CD14-positive monocyte (primary cell): ENCODE measurements at regions of chr2 and their contacts with region 1.

Region 1: GRCh38 chr2:17719562-17720371 is 33.8 kb downstream of the SMC6 start:
- DNase-seq: peak in 2 of 3 donors; percentile 8 to 13
- H3K4me3 ChIP-seq: no peak overlapping the region
- H3K4me3 Mint-ChIP-seq: no peak overlapping the region
- H3K27ac ChIP-seq: no peak overlapping the region
- H3K27ac Mint-ChIP-seq: no peak overlapping the region
- H3K4me1 ChIP-seq: no peaks in the 10 kb centered on the region
- H3K4me1 Mint-ChIP-seq: no peaks in the 10 kb centered on the region
- H3K27me3 ChIP-seq: no peaks in the 10 kb centered on the region
- H3K27me3 Mint-ChIP-seq: no peaks in the 10 kb centered on the region
- CTCF ChIP-seq: peak; percentile 93

Region 2: DNA sequence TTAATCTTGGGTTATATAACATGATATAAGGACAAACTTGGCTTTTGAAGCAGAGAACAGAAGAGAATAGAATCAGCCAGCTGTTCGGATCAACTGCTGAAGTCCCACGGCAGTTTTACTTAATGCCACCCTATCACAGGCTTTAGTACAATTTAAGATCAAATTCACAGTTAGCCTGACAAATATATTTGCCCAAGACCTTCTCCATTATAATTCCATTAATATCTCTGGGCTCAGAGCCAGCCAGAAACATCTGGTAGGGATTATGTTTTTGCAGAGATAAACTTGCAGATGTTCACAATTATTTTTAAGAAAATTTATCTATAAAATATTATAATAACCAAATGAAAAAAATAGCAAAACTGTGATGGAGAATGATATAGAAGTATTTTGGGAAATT is 582.9 kb before region 1 on chr2:
- intact Hi-C with region 1: no loop called
- DNase-seq: no peak
- H3K4me3 ChIP-seq: no peak overlapping the region
- H3K4me3 Mint-ChIP-seq: no peak overlapping the region
- H3K27ac ChIP-seq: no peak overlapping the region
- H3K27ac Mint-ChIP-seq: no peak overlapping the region
- H3K4me1 ChIP-seq: no peaks in the 10 kb centered on the region
- H3K4me1 Mint-ChIP-seq: no peaks in the 10 kb centered on the region
- H3K27me3 ChIP-seq: no peaks in the 10 kb centered on the region
- H3K27me3 Mint-ChIP-seq: peaks cover 0 to 1% (median 1%) of the 10 kb centered on the region in 3 donors
- CTCF ChIP-seq: no peak

Region 3: DNA sequence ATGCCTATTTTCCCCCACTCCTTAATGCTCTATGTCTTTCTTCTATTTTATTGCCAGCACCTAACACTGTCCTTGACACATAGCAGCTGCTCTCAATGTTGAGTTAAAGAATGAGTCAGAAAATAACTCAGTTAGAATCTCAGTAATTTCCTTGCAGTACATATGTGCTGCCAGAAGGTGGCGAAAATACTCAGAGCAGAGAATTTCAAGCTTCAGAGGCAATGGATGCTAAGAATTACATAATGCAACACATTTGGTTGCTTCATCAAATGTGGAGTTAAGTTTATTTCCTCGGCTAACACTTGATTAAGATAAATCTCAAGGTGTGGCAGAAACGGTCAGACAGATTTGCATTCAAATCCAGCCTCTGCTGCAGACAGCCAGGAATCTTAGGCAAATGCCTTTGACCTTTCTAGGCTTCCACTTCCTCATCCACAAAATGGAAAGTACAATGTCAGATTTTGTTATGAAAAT is 73.6 kb before region 1 on chr2:
- intact Hi-C with region 1: no loop called
- DNase-seq: peak; percentile 59 to 74 (median 72)
- H3K4me3 ChIP-seq: no peak overlapping the region
- H3K4me3 Mint-ChIP-seq: no peak overlapping the region
- H3K27ac ChIP-seq: peak overlapping the region in 1 of 2 donors; percentile 7
- H3K27ac Mint-ChIP-seq: peak overlapping the region in 3 of 7 donors; percentile 10 to 75 (median 61)
- H3K4me1 ChIP-seq: peaks cover 37 to 46% of the 10 kb centered on the region in 2 donors
- H3K4me1 Mint-ChIP-seq: peaks cover 64% of the 10 kb centered on the region
- H3K27me3 ChIP-seq: no peaks in the 10 kb centered on the region
- H3K27me3 Mint-ChIP-seq: peaks cover 0 to 5% (median 0%) of the 10 kb centered on the region in 3 donors
- CTCF ChIP-seq: peak; percentile 89

Region 4: GRCh38 chr2:17672583-17673317 is 47.0 kb before region 1 on chr2:
- intact Hi-C with region 1: no loop called
- DNase-seq: no peak
- H3K4me3 ChIP-seq: no peak overlapping the region
- H3K4me3 Mint-ChIP-seq: no peak overlapping the region
- H3K27ac ChIP-seq: no peak overlapping the region
- H3K27ac Mint-ChIP-seq: no peak overlapping the region
- H3K4me1 ChIP-seq: no peaks in the 10 kb centered on the region
- H3K4me1 Mint-ChIP-seq: no peaks in the 10 kb centered on the region
- H3K27me3 ChIP-seq: no peaks in the 10 kb centered on the region
- H3K27me3 Mint-ChIP-seq: peaks cover 0 to 2% (median 0%) of the 10 kb centered on the region in 3 donors
- CTCF ChIP-seq: no peak

Region 5: GRCh38 chr2:17830053-17831034 is 110.6 kb after region 1 on chr2:
- intact Hi-C with region 1: loop called (anchors 1 to 10 kb)
- DNase-seq: peak in 2 of 3 donors; percentile 30 to 44
- H3K4me3 ChIP-seq: peak overlapping the region in 1 of 3 experiments; percentile 27
- H3K4me3 Mint-ChIP-seq: peak overlapping the region; percentile 24 to 75
- H3K27ac ChIP-seq: no peak overlapping the region
- H3K27ac Mint-ChIP-seq: peak overlapping the region in 1 of 7 donors; percentile 22
- H3K4me1 ChIP-seq: peaks cover 7 to 8% of the 10 kb centered on the region in 2 donors
- H3K4me1 Mint-ChIP-seq: peaks cover 8% of the 10 kb centered on the region
- H3K27me3 ChIP-seq: peaks cover 0 to 13% of the 10 kb centered on the region in 2 donors
- H3K27me3 Mint-ChIP-seq: peaks cover 8 to 22% (median 19%) of the 10 kb centered on the region in 3 donors
- CTCF ChIP-seq: peak; percentile 93